ENCODE measurements at regions of chr1 and their contacts with region 1.

Region 1: GRCh38 chr1:70410604-70411359 is at the start of gene CTH:
- DNase-seq: peak; percentile 96
- H3K4me3 ChIP-seq: peak within 1 kb of the TSS; percentile 77
- H3K27ac ChIP-seq: peak within 1 kb of the TSS; percentile 65
- H3K4me1 ChIP-seq: peaks cover 35% of the 10 kb centered on the region
- CTCF ChIP-seq: no peak
- total RNA-seq, gene CTH: 6.3 and 9.7 TPM in 2 replicates

Region 2: GRCh38 chr1:70205434-70206118 is 205.2 kb before region 1 on chr1 and contains the start of gene LRRC40:
- CTCF ChIA-PET with region 1: no interaction called
- POLR2A ChIA-PET with region 1: interaction called, 11 read pairs
- intact Hi-C with region 1: loop called (anchors 5 kb)
- DNase-seq: peak; percentile 96
- H3K4me3 ChIP-seq: peak within 1 kb of the TSS; percentile 76
- H3K27ac ChIP-seq: peak within 1 kb of the TSS; percentile 81
- H3K4me1 ChIP-seq: peaks cover 52% of the 10 kb centered on the region
- CTCF ChIP-seq: peak; percentile 52
- total RNA-seq, gene LRRC40: 20.1 and 20.3 TPM in 2 replicates

Region 3: DNA sequence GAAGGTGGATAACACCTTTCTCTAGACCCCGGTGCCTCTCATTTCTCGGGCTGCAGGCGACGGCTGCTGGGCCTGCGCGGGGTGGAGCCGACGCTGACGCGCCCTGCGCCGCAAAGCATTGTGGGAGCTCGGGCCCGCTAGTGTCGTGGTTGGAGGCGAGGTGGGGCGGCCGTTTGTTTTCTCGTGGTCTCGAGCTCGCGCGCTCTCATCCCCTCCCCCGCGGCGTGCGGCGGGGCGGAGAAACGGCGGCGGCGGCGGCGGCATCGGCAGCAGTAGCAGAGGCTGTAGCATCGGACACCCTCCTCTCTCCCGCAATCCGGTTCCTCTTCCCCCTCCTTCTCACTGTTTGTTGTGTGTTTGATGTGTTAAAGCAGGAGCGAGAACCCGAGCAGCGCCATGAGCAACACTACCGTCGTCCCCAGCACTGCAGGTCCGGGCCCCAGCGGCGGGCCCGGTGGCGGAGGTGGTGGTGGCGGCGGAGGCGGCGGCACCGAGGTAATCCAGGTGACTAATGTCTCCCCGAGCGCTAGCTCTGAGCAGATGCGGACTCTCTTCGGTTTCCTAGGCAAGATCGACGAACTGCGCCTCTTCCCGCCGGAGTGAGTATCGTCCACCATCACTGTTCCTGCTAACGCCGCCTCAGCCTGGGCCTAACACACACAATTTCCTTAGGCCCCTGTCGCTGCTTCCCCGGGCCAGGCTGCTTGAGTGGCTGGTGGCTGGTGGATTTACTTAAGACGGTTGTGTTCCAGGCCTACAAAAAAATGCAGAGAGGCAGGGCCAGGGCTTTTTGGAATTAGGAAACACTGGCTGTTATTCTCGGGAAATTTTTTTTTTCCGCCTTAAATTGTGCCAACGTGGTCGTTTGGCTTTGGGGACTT is 189.3 kb before region 1 on chr1 and contains the start of gene SRSF11:
- CTCF ChIA-PET with region 1: interaction called, 3 read pairs
- POLR2A ChIA-PET with region 1: interaction called, 15 read pairs
- intact Hi-C with region 1: no loop called
- DNase-seq: peak; percentile 95
- H3K4me3 ChIP-seq: peak within 1 kb of the TSS; percentile 90
- H3K27ac ChIP-seq: peak within 1 kb of the TSS; percentile 92
- H3K4me1 ChIP-seq: peaks cover 53% of the 10 kb centered on the region
- CTCF ChIP-seq: peak; percentile 33; the same call in 1 of the 2 replicates
- total RNA-seq, gene SRSF11: 165 and 198 TPM in 2 replicates

Region 4: GRCh38 chr1:70234733-70235132 is 176.0 kb before region 1 on chr1:
- CTCF ChIA-PET with region 1: no interaction called
- POLR2A ChIA-PET with region 1: no interaction called
- intact Hi-C with region 1: no loop called
- DNase-seq: no peak
- H3K4me3 ChIP-seq: no peak overlapping the region
- H3K27ac ChIP-seq: no peak overlapping the region
- H3K4me1 ChIP-seq: no peaks in the 10 kb centered on the region
- CTCF ChIP-seq: no peak

Region 5: GRCh38 chr1:70348399-70349165 is 62.2 kb before region 1 on chr1:
- CTCF ChIA-PET with region 1: no interaction called
- POLR2A ChIA-PET with region 1: interaction called, 43 read pairs
- intact Hi-C with region 1: no loop called
- DNase-seq: no peak
- H3K4me3 ChIP-seq: no peak overlapping the region
- H3K27ac ChIP-seq: no peak overlapping the region
- H3K4me1 ChIP-seq: peaks cover 8% of the 10 kb centered on the region
- CTCF ChIP-seq: no peak

Region 6: DNA sequence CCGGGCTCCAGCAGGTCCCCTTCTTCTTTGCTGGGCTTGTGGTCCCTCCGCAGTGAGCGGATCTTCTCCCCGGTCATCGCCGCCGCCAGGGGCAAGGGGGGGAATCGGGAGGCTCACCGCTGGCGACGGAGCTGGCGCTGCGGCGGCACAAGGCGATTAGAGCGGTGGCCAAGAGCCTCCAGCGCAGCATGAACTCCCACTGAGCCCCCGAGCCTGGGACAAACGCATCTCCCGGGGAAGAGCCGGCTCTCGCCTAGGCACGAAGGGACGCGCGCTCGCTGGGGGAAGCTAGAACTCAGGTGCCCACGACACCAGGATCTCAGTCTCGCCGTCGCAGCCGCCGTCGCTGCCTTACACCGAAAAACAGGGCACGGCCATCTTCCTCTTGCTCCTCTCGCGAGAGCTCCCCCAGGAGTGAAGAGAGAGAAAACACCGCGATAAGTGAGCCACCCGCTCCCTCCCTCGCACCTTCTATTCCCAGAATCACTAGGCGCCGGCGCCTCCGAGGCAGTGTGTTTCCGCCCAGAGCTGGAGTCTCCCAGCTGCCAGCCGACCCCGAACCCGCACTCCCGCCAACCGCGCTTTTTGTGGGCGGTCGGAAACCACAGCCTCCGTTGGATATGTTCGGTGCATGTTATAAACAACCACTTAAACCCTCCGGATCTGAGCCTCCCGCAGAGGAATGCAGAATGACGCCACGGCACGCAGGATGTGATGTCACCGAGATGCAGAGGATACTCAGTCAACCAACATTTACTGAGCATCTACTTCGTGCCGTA is 56.3 kb before region 1 on chr1 and contains the start of gene ANKRD13C:
- CTCF ChIA-PET with region 1: no interaction called
- POLR2A ChIA-PET with region 1: interaction called, 43 read pairs
- intact Hi-C with region 1: loop called (anchors 1 kb)
- DNase-seq: peak; percentile 96
- H3K4me3 ChIP-seq: peak within 1 kb of the TSS; percentile 74
- H3K27ac ChIP-seq: peak within 1 kb of the TSS; percentile 76
- H3K4me1 ChIP-seq: peaks cover 16% of the 10 kb centered on the region
- CTCF ChIP-seq: no peak
- total RNA-seq, gene ANKRD13C: 22.1 and 25.0 TPM in 2 replicates

Region 7: GRCh38 chr1:71080739-71081696 is 670.2 kb after region 1 on chr1 and contains the start of gene ZRANB2:
- CTCF ChIA-PET with region 1: no interaction called
- POLR2A ChIA-PET with region 1: no interaction called
- intact Hi-C with region 1: loop called (anchors 10 kb)
- DNase-seq: peak; percentile 98
- H3K4me3 ChIP-seq: peak within 1 kb of the TSS; percentile 92
- H3K27ac ChIP-seq: peak within 1 kb of the TSS; percentile 62
- H3K4me1 ChIP-seq: peaks cover 19% of the 10 kb centered on the region
- CTCF ChIP-seq: peak; percentile 82
- total RNA-seq, gene ZRANB2: 75.9 and 82.1 TPM in 2 replicates